GM10248 (cell line): ENCODE measurements at regions of chr2 and their contacts with region 1.

Region 1: DNA sequence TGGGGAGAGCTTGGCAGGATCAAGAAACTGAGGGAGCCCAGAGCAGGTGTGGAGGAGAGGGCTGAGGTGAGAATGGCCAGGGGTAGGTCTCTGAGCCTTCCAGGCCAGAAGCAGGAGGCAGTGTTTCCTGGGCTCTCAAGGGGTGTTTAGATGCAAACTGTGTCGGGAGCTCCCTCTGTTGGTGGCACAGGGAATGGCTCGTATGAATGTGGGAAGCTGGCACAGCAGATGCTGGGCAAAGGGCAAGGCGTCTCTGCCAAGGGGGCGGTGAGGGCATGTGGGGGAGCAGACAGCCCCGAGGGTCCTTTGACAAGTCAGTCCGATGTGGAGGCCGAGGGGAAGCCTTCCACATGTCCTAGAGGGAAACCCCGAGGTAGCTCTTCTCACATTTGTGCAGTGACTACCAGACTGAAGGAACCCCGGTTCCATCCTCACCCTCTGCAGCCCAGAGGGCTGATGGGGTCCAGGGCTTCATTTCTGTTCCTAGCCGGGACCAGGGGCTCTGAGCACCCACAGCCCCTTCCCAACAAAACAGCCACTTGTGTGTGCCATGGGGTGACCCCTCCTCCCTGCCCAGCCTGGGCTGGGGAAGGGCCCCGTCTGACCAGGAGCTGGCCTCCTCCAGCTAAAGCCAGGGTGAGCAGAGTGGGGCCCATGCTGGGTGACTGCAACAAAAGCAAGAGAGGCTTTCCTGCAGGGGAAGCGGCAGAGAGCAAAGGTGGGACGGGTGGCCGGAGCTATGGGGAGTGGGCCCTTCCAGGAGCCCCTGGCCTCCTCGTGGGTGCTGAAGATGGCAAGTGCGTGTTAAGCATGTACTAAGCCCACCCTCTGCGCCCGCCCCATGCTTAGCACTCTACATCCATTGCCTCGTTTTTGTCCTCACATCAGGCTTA is 103.4 kb downstream of the SEPTIN10 start:
- DNase-seq: peak; percentile 82
- CTCF ChIP-seq: peak; percentile 85

Region 2: GRCh38 chr2:108927936-108928659 is 582.3 kb before region 1 on chr2:
- CTCF ChIA-PET with region 1: interaction called, 10 read pairs
- POLR2A ChIA-PET with region 1: no interaction called
- DNase-seq: peak; percentile 58
- CTCF ChIP-seq: peak; percentile 72

Region 3: GRCh38 chr2:109046925-109047508 is 463.4 kb before region 1 on chr2:
- CTCF ChIA-PET with region 1: no interaction called
- POLR2A ChIA-PET with region 1: no interaction called
- DNase-seq: peak; percentile 45
- CTCF ChIP-seq: no peak

Region 4: DNA sequence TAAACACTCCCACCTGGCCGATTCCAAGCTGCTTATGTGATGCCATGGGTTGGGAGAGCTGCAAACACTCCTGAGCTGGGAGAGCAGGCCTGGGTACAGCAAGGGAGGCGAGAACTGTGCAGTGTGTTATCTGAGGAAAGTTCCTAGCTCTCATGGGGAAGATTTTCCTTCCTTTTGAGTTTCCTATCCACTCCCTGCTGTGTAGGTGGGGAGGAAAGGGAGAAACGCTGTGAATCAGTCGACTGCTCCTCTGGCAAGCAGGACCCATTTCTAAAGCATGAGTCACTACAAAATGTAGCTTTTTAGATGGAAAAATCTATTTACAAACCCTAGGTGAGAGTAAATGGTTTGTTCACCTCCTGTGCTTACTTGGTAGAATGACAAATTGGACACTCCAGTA is 301.0 kb before region 1 on chr2:
- CTCF ChIA-PET with region 1: no interaction called
- POLR2A ChIA-PET with region 1: no interaction called
- DNase-seq: no peak
- CTCF ChIP-seq: no peak

Region 5: GRCh38 chr2:109482361-109482861 is 28.0 kb before region 1 on chr2:
- CTCF ChIA-PET with region 1: interaction called, 19 read pairs
- POLR2A ChIA-PET with region 1: no interaction called
- DNase-seq: no peak
- CTCF ChIP-seq: no peak

Region 6: GRCh38 chr2:109497463-109497862 is 12.9 kb before region 1 on chr2:
- CTCF ChIA-PET with region 1: interaction called, 28 read pairs
- POLR2A ChIA-PET with region 1: interaction called, 4 read pairs
- DNase-seq: no peak
- CTCF ChIP-seq: no peak

Region 7: DNA sequence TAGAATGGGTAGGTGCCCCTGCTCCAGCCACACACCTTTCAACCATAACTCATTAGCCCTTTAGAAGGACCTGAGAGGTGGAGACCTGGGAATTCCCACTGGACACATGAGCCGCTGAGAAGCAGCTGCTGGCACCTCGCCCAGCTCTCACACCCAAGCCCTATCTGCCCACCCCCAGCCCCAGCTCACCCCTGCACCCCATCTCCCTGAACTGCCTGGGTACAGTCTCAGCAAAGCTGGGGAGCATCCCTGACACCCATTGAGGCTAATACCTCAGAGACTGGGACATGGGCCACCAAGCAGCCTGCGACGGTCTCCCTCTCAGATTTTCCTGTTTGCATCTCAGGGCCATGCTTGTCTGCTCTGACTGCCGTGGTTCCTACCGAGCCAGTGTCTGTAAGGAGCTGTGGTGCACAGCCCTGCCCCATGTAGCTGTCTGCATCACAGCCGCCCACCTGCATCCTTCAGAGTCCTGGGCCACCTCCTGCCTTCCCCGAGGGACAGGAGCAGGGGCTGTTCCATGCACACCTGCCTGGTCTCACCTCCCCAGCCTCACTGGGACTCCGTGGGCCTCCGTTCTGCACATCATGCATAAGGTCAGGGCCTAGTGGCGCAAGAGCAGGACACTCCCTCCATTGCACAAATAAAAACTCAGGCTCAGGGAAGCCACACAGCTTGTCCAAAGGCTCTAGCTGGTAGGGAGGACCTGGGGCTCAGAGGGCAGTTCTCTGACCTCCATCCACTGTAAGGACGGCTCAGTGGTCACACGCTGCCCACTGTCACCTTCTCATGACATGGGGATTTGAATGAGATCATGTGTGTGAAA is 13.4 kb after region 1 on chr2:
- CTCF ChIA-PET with region 1: interaction called, 24 read pairs
- POLR2A ChIA-PET with region 1: no interaction called
- DNase-seq: no peak
- CTCF ChIP-seq: no peak

Region 8: DNA sequence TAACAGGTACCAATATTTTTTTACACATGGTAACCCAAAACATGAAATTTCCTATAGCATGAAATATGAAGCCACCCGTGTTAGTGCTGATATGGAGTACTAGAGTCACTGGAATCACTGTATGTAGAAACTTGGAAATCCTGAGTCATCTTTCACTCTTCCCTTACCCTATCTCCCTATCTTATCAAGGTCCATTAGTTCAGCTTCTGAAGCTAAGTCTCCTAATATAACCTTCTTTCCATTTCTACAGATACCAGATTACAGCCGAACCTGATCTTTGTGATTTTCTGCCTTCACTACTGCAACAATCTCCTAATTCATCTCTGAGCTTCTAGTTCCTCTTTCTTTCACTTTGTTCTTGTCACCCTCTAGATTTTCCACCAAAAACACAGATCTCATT is 44.4 kb after region 1 on chr2:
- CTCF ChIA-PET with region 1: no interaction called
- POLR2A ChIA-PET with region 1: no interaction called
- DNase-seq: no peak
- CTCF ChIP-seq: no peak

Region 9: DNA sequence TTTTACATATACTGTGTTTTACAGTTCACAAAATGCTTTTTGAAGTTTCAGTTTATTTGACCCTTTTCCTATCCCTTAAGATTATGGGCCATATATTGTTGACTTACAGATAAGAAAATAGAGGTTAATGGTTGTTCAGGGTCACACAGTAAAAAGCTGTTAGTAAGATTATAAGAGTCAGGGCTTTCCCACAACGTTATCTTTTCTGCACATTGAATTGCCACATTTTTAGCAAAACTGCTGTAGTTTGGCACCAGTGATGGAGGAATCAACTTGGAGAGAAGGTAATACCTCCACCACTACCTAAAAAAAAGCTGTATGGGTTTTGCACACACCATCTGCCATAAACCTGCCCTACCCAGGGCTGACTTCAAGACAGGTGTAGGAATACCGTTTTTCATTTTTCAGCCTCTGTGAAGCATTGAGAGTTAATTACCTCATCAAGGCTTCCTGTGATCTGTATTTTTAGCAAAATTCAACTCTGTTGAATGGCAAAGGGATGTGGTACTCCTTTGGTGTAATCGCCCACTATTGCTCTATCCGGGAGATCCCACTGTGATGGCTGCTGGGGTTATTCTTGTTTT is 108.7 kb after region 1 on chr2:
- CTCF ChIA-PET with region 1: no interaction called
- POLR2A ChIA-PET with region 1: no interaction called
- DNase-seq: no peak
- CTCF ChIP-seq: no peak